CD8-positive, alpha-beta T cell (primary cell): ENCODE measurements at regions of chr20 and their contacts with region 1.

Region 1: GRCh38 chr20:25090492-25091429 is 8.8 kb upstream of the VSX1 start:
- DNase-seq: peak; percentile 30 to 93 (median 77)
- ATAC-seq: peak; percentile 97
- H3K4me3 ChIP-seq: peak overlapping the region in 1 of 2 experiments; percentile 1
- H3K4me3 Mint-ChIP-seq: peak overlapping the region; percentile 53
- H3K27ac ChIP-seq: peak overlapping the region in 1 of 2 experiments; percentile 44
- H3K27ac Mint-ChIP-seq: peak overlapping the region; percentile 84
- H3K4me1 ChIP-seq: peaks cover 29% of the 10 kb centered on the region
- H3K4me1 Mint-ChIP-seq: peaks cover 34% of the 10 kb centered on the region
- H3K27me3 ChIP-seq: no peaks in the 10 kb centered on the region
- H3K27me3 Mint-ChIP-seq: peaks cover 6% of the 10 kb centered on the region
- CTCF ChIP-seq: no peak

Region 2: DNA sequence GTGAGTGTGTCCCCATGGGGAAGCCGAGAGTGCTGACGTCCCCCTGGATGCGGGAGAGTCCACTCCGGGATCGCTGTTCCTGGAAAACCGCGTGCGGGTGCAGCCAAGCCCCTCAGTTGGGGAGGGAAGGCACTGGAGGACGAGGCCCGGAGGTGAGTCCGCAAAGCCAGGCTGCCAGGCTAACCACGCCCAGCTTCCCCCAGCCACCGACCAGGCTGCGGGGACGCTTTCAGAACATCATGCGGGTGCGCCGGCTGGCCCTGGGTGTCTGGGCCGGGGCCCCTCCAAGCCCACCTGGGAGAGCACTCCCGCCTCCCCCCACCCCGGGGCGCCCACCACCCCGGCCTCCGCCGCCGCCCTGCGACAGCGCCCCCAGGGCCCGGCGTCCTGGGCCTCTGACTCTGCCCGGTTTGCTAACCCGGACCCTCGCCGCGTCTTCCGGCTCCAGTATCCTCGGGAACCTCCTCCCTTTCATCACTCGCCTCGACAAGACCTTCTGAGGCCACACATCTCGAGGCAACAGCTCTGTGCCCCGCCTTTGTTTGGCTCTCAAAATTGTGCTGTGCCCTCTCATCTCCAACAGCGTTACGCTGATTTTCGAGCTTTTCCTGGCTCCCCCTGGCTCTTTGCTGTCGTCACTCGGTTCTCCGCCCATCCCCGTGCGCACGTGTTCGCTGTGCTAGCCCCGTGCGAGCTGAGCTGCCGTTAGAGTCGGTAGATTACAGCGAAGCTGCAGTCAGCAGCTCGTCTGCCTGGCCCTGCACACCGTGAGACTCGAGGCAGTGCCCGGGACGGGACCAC is 57.6 kb after region 1 on chr20:
- CTCF ChIA-PET with region 1: no interaction called
- POLR2A ChIA-PET with region 1: interaction called, 8 read pairs
- intact Hi-C with region 1: loop called (anchors 5 kb)
- DNase-seq: peak; percentile 22 to 83 (median 73)
- ATAC-seq: peak; percentile 97
- H3K4me3 ChIP-seq: peak overlapping the region; percentile 47 to 49
- H3K4me3 Mint-ChIP-seq: peak overlapping the region; percentile 89
- H3K27ac ChIP-seq: peak overlapping the region in 1 of 2 experiments; percentile 3
- H3K27ac Mint-ChIP-seq: peak overlapping the region; percentile 86
- H3K4me1 ChIP-seq: peaks cover 7% of the 10 kb centered on the region
- H3K4me1 Mint-ChIP-seq: peaks cover 8% of the 10 kb centered on the region
- H3K27me3 ChIP-seq: no peaks in the 10 kb centered on the region
- H3K27me3 Mint-ChIP-seq: peaks cover 4% of the 10 kb centered on the region
- CTCF ChIP-seq: no peak

Region 3: DNA sequence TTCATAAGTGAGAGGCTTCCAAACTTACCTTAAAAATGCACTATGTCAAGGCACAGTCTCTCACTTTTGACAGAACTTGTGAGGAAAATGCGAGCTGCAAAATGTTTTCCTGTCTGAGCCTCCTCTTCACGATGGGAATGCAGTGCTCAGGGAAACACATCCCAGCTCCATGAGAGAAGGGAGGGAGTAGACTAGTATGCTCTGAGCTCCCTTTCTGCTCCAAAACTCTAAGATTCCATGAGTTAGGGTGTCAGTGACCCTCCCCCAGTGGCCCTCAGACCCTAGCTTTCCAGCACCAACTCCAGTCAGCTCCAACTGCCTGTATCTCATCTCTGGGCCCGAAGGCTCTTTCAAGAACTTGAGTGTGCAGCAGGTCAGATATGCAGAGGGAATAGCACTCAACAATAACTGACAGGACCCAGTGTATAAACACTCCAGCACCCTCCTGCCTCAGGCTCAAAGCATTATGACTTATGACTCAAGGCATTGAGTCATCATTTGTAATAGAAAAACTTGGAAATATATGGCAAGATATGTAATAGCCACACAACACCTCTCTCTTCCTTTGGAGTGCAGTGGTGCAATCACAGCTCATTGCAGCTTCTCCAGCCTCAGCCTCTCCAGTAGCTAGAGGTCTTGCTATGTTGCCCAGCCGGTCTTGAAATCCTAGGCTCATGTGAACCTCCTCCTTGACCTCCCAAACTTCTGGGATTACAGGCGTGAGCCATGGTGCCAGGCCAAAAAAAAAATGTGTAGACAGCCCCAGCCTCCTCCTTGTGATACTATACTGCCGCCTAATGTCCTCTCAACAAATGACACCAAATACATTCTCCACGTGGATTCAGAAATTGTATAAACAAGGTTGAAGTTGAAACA is 88.0 kb after region 1 on chr20:
- CTCF ChIA-PET with region 1: interaction called, 11 read pairs
- POLR2A ChIA-PET with region 1: no interaction called
- intact Hi-C with region 1: no loop called
- DNase-seq: peak in 3 of 9 experiments; percentile 8 to 67 (median 56)
- ATAC-seq: peak; percentile 71
- H3K4me3 ChIP-seq: no peak overlapping the region
- H3K4me3 Mint-ChIP-seq: no peak overlapping the region
- H3K27ac ChIP-seq: no peak overlapping the region
- H3K27ac Mint-ChIP-seq: no peak overlapping the region
- H3K4me1 ChIP-seq: no peaks in the 10 kb centered on the region
- H3K4me1 Mint-ChIP-seq: no peaks in the 10 kb centered on the region
- H3K27me3 ChIP-seq: no peaks in the 10 kb centered on the region
- H3K27me3 Mint-ChIP-seq: peaks cover 4% of the 10 kb centered on the region
- CTCF ChIP-seq: peak; percentile 77